ENCODE measurements at regions of chr10 and their contacts with region 1.

Region 1: DNA sequence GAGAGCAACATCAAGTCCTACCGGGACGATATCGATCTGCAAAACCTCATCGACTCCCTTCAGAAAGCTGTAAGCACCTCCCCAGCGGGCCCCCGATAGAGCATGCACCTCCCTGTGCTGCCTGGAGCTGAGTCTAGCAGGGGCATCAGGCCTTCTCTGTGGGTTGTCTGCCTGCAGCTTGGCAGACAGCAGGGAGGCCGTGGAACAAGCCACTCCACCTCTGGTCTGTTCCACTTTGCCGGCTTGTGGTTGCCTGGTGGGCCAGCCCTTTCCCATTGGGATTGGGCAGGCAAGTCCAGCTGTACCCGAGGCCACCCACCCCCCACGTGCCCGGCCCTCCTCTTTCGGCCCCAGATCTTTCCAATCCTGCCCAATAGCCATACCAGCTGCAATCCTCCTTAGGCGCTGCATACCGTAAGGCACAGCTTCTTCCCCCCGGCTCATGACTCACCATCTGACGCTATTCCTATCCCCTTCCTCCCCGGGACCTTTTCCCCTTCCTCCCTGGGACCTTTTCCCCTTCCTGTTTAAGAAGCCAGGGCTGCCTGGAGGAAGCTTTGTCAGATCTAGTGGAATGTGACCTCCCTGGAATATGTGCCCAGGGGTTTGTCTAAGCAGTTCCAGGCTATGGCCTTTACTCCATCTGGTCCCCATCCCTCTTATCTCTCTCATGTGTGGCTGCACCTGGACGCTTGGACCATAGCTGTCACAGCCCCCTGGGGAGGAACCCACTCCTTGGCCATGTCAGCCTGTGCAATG is 28.1 kb upstream of the SH2D4B start:
- DNase-seq: no peak
- H3K4me3 ChIP-seq: no peak overlapping the region
- H3K27ac ChIP-seq: peak overlapping the region in 2 of 4 donors; percentile 42 to 63
- H3K4me1 ChIP-seq: peaks cover 30 to 57% (median 32%) of the 10 kb centered on the region in 4 donors
- H3K27me3 ChIP-seq: no peaks in the 10 kb centered on the region
- CTCF ChIP-seq: no peak
- EP300 ChIP-seq: no peak
- POLR2A ChIP-seq: no peak

Region 2: GRCh38 chr10:80382989-80383388 is 126.6 kb before region 1 on chr10:
- intact Hi-C with region 1: loop called (anchors 5 kb)
- DNase-seq: no peak
- H3K4me3 ChIP-seq: no peak overlapping the region
- H3K27ac ChIP-seq: no peak overlapping the region
- H3K4me1 ChIP-seq: peaks cover 0 to 7% (median 6%) of the 10 kb centered on the region in 4 donors
- H3K27me3 ChIP-seq: no peaks in the 10 kb centered on the region
- CTCF ChIP-seq: peak; percentile 43 to 57 (median 55)
- EP300 ChIP-seq: no peak
- POLR2A ChIP-seq: no peak

Measured in esophagus muscularis mucosa (tissue), 4 donors.